ENCODE measurements at regions of chr1 and their contacts with region 1.

Region 1: GRCh38 chr1:88998716-88999115 is 6.3 kb upstream of the KYAT3 start:
- DNase-seq: peak; percentile 33
- H3K4me3 Mint-ChIP-seq: no peak overlapping the region
- H3K27ac Mint-ChIP-seq: no peak overlapping the region
- H3K4me1 Mint-ChIP-seq: peaks cover 27% of the 10 kb centered on the region
- H3K27me3 Mint-ChIP-seq: peaks cover 4% of the 10 kb centered on the region

Region 2: DNA sequence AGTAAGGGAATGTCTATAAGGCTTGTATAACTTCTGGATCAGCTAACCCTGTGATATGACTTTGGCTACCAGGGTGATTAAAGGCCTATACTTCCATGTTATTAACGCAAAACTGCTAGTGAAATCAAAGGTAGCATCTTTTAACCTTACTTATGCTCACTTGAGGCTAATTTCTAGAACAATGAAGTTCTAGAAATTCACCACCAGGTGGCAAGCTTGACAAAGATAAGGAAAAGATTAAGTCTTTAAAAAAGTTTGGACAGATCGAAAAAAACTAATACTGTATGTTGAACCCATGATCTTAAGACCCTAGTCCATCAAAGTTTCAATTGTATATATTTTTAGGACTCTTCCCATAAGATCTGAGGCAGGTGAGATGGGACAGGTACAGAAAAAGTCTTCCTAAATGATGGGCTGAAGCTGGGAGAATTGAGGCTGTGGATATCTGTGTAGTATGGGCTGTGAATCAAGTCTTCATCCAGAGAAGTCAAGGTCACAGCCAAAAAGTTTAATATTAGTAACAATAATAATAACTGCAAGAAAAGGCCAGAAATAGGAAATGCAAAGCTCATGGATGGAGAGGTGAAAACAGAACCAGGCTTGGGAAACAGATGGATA is 25.1 kb before region 1 on chr1:
- CTCF ChIA-PET with region 1: interaction called, 5 read pairs
- intact Hi-C with region 1: loop called (anchors 1 kb)
- DNase-seq: no peak
- H3K4me3 Mint-ChIP-seq: no peak overlapping the region
- H3K27ac Mint-ChIP-seq: no peak overlapping the region
- H3K4me1 Mint-ChIP-seq: peaks cover 27% of the 10 kb centered on the region
- H3K27me3 Mint-ChIP-seq: no peaks in the 10 kb centered on the region

Region 3: GRCh38 chr1:88983791-88984559 is 14.7 kb before region 1 on chr1:
- CTCF ChIA-PET with region 1: interaction called, 23 read pairs
- intact Hi-C with region 1: no loop called
- DNase-seq: peak; percentile 42
- H3K4me3 Mint-ChIP-seq: peak overlapping the region; percentile 27
- H3K27ac Mint-ChIP-seq: peak overlapping the region; percentile 47
- H3K4me1 Mint-ChIP-seq: peaks cover 80% of the 10 kb centered on the region
- H3K27me3 Mint-ChIP-seq: no peaks in the 10 kb centered on the region

Region 4: GRCh38 chr1:89022167-89022959 is 23.6 kb after region 1 on chr1 and contains the start of gene GBP3:
- CTCF ChIA-PET with region 1: interaction called, 11 read pairs
- intact Hi-C with region 1: loop called (anchors 1 kb)
- DNase-seq: no peak
- H3K4me3 Mint-ChIP-seq: peak within 1 kb of the TSS; percentile 73
- H3K27ac Mint-ChIP-seq: peak within 1 kb of the TSS; percentile 72
- H3K4me1 Mint-ChIP-seq: peaks cover 51% of the 10 kb centered on the region
- H3K27me3 Mint-ChIP-seq: no peaks in the 10 kb centered on the region
- total RNA-seq, gene GBP3: 1.4 to 1.8 TPM

Region 5: GRCh38 chr1:89065079-89065868 is 66.6 kb after region 1 on chr1 and contains the start of gene GBP1:
- CTCF ChIA-PET with region 1: interaction called, 5 read pairs
- intact Hi-C with region 1: loop called (anchors 2 kb)
- DNase-seq: no peak
- H3K4me3 Mint-ChIP-seq: peak within 1 kb of the TSS; percentile 75
- H3K27ac Mint-ChIP-seq: peak within 1 kb of the TSS; percentile 89
- H3K4me1 Mint-ChIP-seq: peaks cover 53% of the 10 kb centered on the region
- H3K27me3 Mint-ChIP-seq: no peaks in the 10 kb centered on the region
- total RNA-seq, gene GBP1: 48.2 to 52.8 TPM

Region 6: GRCh38 chr1:89085781-89086180 is 87.1 kb after region 1 on chr1:
- CTCF ChIA-PET with region 1: interaction called, 17 read pairs
- intact Hi-C with region 1: loop called (anchors 1 kb)
- DNase-seq: peak; percentile 70
- H3K4me3 Mint-ChIP-seq: no peak overlapping the region
- H3K27ac Mint-ChIP-seq: no peak overlapping the region
- H3K4me1 Mint-ChIP-seq: no peaks in the 10 kb centered on the region
- H3K27me3 Mint-ChIP-seq: no peaks in the 10 kb centered on the region

Region 7: GRCh38 chr1:89221341-89221740 is 222.6 kb after region 1 on chr1:
- CTCF ChIA-PET with region 1: no interaction called
- intact Hi-C with region 1: no loop called
- DNase-seq: no peak
- H3K4me3 Mint-ChIP-seq: no peak overlapping the region
- H3K27ac Mint-ChIP-seq: no peak overlapping the region
- H3K4me1 Mint-ChIP-seq: peaks cover 4% of the 10 kb centered on the region
- H3K27me3 Mint-ChIP-seq: no peaks in the 10 kb centered on the region

Measured in activated naive CD4-positive, alpha-beta T cell treated with anti-CD3 and anti-CD28 coated beads for 36 hours (primary cell).